Naive thymus-derived CD4-positive, alpha-beta T cell (primary cell): ENCODE measurements at regions of chr3 and their contacts with region 1.

Region 1: DNA sequence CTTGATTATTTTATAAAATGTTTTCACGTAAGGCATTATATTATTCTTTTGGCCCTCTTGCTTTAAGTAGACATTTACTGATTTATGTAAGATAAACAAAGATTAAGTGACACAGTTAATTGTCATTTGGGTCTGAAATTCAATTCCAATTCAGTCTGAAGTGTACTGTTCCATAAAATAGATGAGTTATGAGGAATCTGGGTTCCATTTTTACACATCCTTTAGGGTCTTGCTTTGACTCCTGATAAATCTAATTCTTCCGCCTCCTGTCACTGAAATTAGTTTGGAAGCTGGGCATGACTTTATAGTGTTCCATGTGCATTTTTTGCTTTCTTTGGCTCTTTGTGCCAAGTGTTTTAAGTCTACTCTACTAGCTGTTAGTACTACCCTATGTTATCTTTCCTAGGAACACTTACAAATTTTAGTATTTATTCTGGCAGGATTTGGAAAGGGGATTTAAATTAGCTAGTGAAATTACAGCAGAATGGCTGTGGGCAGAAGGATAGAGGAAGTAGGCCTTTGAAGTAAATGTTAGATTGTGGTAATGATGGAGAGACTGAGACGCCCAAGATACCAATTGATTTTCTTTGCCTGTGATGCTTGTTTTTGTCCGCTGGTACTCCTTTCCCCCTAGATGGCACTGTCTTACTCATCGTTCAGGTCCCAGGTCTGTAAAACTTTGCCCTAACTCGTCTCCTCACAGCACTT is 14.3 kb downstream of the ARL8B start:
- DNase-seq: peak in 7 of 9 donors; percentile 42 to 69 (median 61)
- ATAC-seq: peak; percentile 89
- H3K4me3 ChIP-seq: no peak overlapping the region
- H3K4me3 Mint-ChIP-seq: peak overlapping the region in 4 of 10 donors; percentile 0 to 23 (median 10)
- H3K27ac ChIP-seq: peak overlapping the region; percentile 9
- H3K27ac Mint-ChIP-seq: peak overlapping the region; percentile 12 to 82 (median 47)
- H3K4me1 ChIP-seq: peaks cover 10 to 13% of the 10 kb centered on the region in 2 donors
- H3K4me1 Mint-ChIP-seq: peaks cover 43 to 80% (median 74%) of the 10 kb centered on the region in 7 donors
- H3K27me3 ChIP-seq: no peaks in the 10 kb centered on the region
- H3K27me3 Mint-ChIP-seq: no peaks in the 10 kb centered on the region

Region 2: DNA sequence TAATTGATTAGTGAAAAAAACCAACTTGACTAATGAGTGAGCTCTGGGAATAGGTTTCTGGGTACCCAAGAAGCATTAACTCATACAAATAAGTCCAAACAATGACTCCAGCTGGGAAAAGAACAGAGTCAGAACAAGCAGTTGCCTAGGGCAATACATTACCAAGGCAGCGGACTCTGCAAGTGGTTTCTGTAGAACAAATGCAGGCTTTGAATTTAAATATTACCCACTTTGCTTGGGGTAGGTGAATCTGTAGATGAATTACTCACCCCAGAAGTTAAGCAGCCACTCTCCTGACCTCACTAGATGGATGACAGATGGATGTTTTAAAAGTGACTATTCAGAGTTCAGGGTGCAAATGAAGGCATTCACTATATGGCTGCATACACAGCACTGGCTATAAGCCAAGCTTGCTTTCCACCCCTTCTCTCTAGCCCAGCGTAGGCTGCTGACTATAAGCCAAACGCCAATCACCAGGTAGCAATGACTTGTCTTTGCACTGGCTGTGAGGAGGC is 230.2 kb before region 1 on chr3:
- CTCF ChIA-PET with region 1: no interaction called
- POLR2A ChIA-PET with region 1: no interaction called
- intact Hi-C with region 1: no loop called
- DNase-seq: no peak
- ATAC-seq: no peak
- H3K4me3 ChIP-seq: no peak overlapping the region
- H3K4me3 Mint-ChIP-seq: peak overlapping the region in 2 of 10 donors; percentile 29 to 38
- H3K27ac ChIP-seq: no peak overlapping the region
- H3K27ac Mint-ChIP-seq: peak overlapping the region in 4 of 9 donors; percentile 7 to 75 (median 38)
- H3K4me1 ChIP-seq: peaks cover 14 to 35% of the 10 kb centered on the region in 2 donors
- H3K4me1 Mint-ChIP-seq: peaks cover 33 to 85% (median 58%) of the 10 kb centered on the region in 7 donors
- H3K27me3 ChIP-seq: no peaks in the 10 kb centered on the region
- H3K27me3 Mint-ChIP-seq: no peaks in the 10 kb centered on the region

Region 3: GRCh38 chr3:5187156-5187919 is 51.0 kb after region 1 on chr3 and contains the start of gene EDEM1:
- CTCF ChIA-PET with region 1: interaction called, 6 read pairs
- POLR2A ChIA-PET with region 1: no interaction called
- intact Hi-C with region 1: loop called (anchors 1 to 2 kb)
- DNase-seq: peak; percentile 81 to 100 (median 88)
- ATAC-seq: peak; percentile 95
- H3K4me3 ChIP-seq: peak within 1 kb of the TSS; percentile 89
- H3K4me3 Mint-ChIP-seq: peak within 1 kb of the TSS; percentile 90 to 100 (median 98)
- H3K27ac ChIP-seq: peak within 1 kb of the TSS; percentile 97
- H3K27ac Mint-ChIP-seq: peak within 1 kb of the TSS; percentile 95 to 100 (median 98)
- H3K4me1 ChIP-seq: peaks cover 13 to 21% of the 10 kb centered on the region in 2 donors
- H3K4me1 Mint-ChIP-seq: peaks cover 14 to 41% (median 32%) of the 10 kb centered on the region in 7 donors
- H3K27me3 ChIP-seq: no peaks in the 10 kb centered on the region
- H3K27me3 Mint-ChIP-seq: no peaks in the 10 kb centered on the region
- total RNA-seq, gene EDEM1: 97.3 to 138 (median 126) TPM

Region 4: DNA sequence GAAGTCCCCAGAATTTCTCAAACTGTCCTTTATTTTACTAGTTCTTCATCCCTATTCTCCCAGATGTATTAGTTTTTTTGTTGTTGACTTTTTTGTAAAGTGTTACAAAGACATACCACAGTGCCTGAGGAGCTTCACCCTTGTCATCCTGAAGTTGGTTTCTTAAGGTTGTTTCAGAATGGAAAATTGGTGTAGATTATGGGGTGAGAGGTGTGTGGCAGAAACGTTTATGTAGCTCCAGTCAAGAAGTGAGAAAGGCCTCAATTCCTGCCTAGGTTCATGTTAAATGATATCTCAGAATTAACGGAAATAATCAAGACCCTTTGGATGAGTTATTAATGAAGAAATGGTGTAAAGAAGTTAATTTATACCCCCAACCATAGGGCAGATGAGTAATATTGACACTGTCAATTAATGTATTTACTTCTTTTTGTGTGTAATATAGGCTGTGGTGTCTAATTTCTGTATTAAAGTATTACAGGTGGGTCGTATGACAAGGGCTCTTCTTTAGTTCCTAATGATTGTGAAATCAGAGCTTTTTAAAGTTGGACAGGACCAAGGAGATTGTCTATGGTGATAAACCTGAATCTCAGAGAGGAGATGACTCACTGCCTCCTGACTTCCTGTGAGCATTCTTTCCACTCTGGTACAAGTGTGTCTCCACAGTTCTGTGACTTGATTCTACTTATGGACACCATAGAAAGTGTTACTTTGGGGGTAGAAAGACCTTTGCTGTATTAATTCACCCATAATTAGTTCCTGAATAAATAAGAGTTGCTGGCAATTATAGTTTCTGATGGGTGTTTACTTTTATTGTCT is 58.2 kb after region 1 on chr3:
- CTCF ChIA-PET with region 1: interaction called, 4 read pairs
- POLR2A ChIA-PET with region 1: interaction called, 5 read pairs
- intact Hi-C with region 1: loop called in 1 of 2 experiments (anchors 1 kb)
- DNase-seq: peak in 1 of 9 donors; percentile 69
- ATAC-seq: peak; percentile 54
- H3K4me3 ChIP-seq: no peak overlapping the region
- H3K4me3 Mint-ChIP-seq: peak overlapping the region; percentile 2 to 78 (median 46)
- H3K27ac ChIP-seq: peak overlapping the region; percentile 64
- H3K27ac Mint-ChIP-seq: peak overlapping the region; percentile 63 to 96 (median 93)
- H3K4me1 ChIP-seq: peaks cover 76 to 88% of the 10 kb centered on the region in 2 donors
- H3K4me1 Mint-ChIP-seq: peaks cover 73 to 90% (median 87%) of the 10 kb centered on the region in 7 donors
- H3K27me3 ChIP-seq: no peaks in the 10 kb centered on the region
- H3K27me3 Mint-ChIP-seq: no peaks in the 10 kb centered on the region

Region 5: GRCh38 chr3:5232570-5232969 is 96.2 kb after region 1 on chr3:
- CTCF ChIA-PET with region 1: interaction called, 4 read pairs
- POLR2A ChIA-PET with region 1: interaction called, 4 read pairs
- intact Hi-C with region 1: loop called in 1 of 2 experiments (anchors 1 kb)
- DNase-seq: no peak
- ATAC-seq: no peak
- H3K4me3 ChIP-seq: no peak overlapping the region
- H3K4me3 Mint-ChIP-seq: no peak overlapping the region
- H3K27ac ChIP-seq: no peak overlapping the region
- H3K27ac Mint-ChIP-seq: no peak overlapping the region
- H3K4me1 ChIP-seq: no peaks in the 10 kb centered on the region
- H3K4me1 Mint-ChIP-seq: peaks cover 0 to 3% (median 0%) of the 10 kb centered on the region in 7 donors
- H3K27me3 ChIP-seq: no peaks in the 10 kb centered on the region
- H3K27me3 Mint-ChIP-seq: peaks cover 0 to 12% (median 0%) of the 10 kb centered on the region in 5 donors

Region 6: GRCh38 chr3:5304789-5305683 is 168.7 kb after region 1 on chr3:
- CTCF ChIA-PET with region 1: no interaction called
- POLR2A ChIA-PET with region 1: no interaction called
- intact Hi-C with region 1: loop called (anchors 1 to 10 kb)
- DNase-seq: peak in 4 of 9 donors; percentile 6 to 22 (median 7)
- ATAC-seq: no peak
- H3K4me3 ChIP-seq: no peak overlapping the region
- H3K4me3 Mint-ChIP-seq: no peak overlapping the region
- H3K27ac ChIP-seq: no peak overlapping the region
- H3K27ac Mint-ChIP-seq: no peak overlapping the region
- H3K4me1 ChIP-seq: no peaks in the 10 kb centered on the region
- H3K4me1 Mint-ChIP-seq: no peaks in the 10 kb centered on the region
- H3K27me3 ChIP-seq: no peaks in the 10 kb centered on the region
- H3K27me3 Mint-ChIP-seq: peaks cover 0 to 5% (median 0%) of the 10 kb centered on the region in 5 donors

Region 7: DNA sequence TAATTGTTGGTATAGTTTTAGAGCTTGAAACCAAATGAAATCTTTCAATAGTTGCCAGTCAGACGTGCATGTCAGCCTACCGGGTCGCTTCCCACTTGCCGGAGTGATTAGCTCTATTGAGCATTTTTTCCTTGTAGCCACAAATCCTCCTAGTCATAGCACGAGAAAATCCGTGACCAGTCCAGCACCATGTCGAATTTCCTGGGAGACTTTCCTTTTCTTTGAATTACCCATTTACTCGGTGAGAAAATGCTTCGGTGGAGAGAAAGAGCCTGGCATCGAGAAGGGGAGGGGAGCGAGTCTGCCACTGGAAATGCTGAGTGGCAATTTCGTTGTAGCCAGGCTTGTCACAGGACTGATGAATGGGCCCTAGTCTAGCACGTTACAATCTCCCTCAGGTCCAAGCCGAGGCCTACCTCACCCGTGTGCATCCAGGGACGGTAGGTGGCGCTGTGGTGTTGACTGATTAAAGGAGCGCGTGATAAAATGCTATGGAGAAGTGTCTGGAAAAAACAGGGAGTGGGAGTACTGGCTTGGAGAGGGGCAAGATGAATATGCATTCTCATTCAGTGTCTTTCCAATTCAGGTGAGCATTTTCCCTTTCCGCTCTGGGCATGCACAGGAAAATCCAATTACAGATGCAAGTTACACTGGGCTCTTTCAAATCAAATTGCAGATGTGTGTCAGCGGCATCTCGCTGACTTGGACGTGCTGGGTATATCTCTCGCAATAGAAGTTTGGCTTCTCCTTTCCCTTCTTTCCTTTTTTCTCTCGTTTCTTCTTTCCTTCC is 289.9 kb after region 1 on chr3:
- CTCF ChIA-PET with region 1: no interaction called
- POLR2A ChIA-PET with region 1: no interaction called
- intact Hi-C with region 1: loop called in 1 of 2 experiments (anchors 1 kb)
- DNase-seq: peak in 7 of 9 donors; percentile 13 to 67 (median 22)
- ATAC-seq: peak; percentile 74
- H3K4me3 ChIP-seq: no peak overlapping the region
- H3K4me3 Mint-ChIP-seq: peak overlapping the region in 1 of 10 donors; percentile 12
- H3K27ac ChIP-seq: no peak overlapping the region
- H3K27ac Mint-ChIP-seq: peak overlapping the region in 1 of 9 donors; percentile 4
- H3K4me1 ChIP-seq: no peaks in the 10 kb centered on the region
- H3K4me1 Mint-ChIP-seq: peaks cover 0 to 9% (median 5%) of the 10 kb centered on the region in 7 donors
- H3K27me3 ChIP-seq: no peaks in the 10 kb centered on the region
- H3K27me3 Mint-ChIP-seq: peaks cover 0 to 19% (median 8%) of the 10 kb centered on the region in 5 donors

Region 8: GRCh38 chr3:5499404-5499803 is 363.0 kb after region 1 on chr3:
- CTCF ChIA-PET with region 1: no interaction called
- POLR2A ChIA-PET with region 1: no interaction called
- intact Hi-C with region 1: loop called in 1 of 2 experiments (anchors 10 kb)
- DNase-seq: no peak
- ATAC-seq: no peak
- H3K4me3 ChIP-seq: no peak overlapping the region
- H3K4me3 Mint-ChIP-seq: no peak overlapping the region
- H3K27ac ChIP-seq: no peak overlapping the region
- H3K27ac Mint-ChIP-seq: peak overlapping the region in 1 of 9 donors; percentile 17
- H3K4me1 ChIP-seq: no peaks in the 10 kb centered on the region
- H3K4me1 Mint-ChIP-seq: peaks cover 0 to 9% (median 0%) of the 10 kb centered on the region in 7 donors
- H3K27me3 ChIP-seq: no peaks in the 10 kb centered on the region
- H3K27me3 Mint-ChIP-seq: peaks cover 0 to 2% (median 0%) of the 10 kb centered on the region in 5 donors